ENCODE measurements at regions of chr12 and their contacts with region 1.

Region 1: DNA sequence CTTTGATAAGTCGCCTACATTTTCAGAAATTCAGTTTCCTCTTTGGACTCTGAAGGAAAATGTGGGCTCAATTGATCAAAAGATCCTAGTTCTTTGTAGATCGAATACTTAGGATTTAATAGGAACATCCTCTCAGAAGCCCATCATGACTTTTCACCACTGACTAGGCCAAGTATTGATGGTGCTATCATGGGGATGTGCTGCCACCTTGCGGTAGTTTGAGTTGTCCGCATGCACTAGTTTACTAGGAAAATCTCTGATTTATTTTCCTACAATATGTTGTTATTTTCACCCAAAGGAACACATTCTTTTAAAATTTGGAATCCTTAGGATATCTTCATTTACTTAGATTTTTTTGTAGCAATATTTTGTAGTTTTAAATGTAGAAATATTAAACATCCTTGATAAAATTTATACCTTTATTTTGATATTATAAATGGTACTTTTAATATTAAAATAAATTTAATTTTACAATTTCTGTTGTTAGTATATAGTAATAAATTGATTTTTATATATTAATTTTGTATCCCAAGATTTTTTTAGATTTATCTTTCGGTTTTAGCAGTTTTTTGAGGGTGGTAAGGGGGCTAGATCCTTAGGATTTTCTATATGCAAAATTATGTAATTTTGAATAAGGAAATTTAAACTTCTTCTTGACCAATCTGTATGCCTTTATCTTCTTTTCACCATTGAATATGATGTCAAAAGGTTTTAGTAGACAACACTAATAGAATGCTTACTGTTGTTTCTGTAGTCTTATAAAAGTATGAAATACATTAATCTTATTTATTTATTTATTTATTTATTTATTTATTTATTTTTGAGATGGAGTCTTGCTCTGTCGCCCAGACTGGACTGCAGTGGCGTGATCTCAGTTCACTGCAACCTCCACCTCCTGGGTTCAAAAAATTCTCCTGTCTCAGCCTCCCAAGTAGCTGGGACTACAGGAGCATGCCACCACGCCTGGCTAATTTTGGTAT is 52.9 kb upstream of the OR9K2 start:
- DNase-seq: peak; percentile 80
- H3K4me3 Mint-ChIP-seq: no peak overlapping the region
- H3K27ac Mint-ChIP-seq: no peak overlapping the region
- H3K4me1 Mint-ChIP-seq: no peaks in the 10 kb centered on the region
- H3K27me3 Mint-ChIP-seq: peaks cover 35% of the 10 kb centered on the region
- CTCF ChIP-seq: peak; percentile 86

Region 2: DNA sequence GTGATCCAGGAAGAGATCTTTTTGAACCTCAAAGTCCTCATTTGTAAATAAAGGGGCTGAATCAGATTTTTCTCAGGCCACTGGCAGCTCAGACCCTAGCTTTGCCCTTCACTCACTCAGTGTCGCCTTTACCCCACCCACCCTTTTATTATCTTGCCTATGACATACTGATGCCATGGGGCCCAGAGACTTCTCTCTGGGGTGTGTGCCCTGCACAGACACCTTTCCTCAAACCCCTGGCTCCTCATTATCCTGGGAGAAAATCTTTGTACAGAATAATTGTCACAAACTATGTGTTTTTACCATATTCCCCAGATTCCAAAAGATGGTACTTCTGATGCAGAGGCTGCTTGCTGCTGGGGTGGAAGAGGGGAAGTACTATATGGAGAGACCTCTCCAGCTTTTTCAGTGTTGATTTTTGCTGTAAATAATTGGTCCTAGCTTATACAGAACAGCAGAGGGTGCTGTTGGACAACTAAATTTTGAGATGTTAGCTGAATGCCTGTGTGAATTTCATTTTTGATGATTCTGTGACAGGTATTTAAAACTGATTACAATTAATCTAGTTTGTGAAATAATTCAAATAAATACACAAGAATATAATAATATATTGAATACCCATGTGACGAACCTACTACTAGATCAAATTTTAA is 371.3 kb before region 1 on chr12:
- CTCF ChIA-PET with region 1: interaction called, 10 read pairs
- intact Hi-C with region 1: loop called (anchors 2 kb)
- DNase-seq: peak; percentile 25
- H3K4me3 Mint-ChIP-seq: no peak overlapping the region
- H3K27ac Mint-ChIP-seq: no peak overlapping the region
- H3K4me1 Mint-ChIP-seq: no peaks in the 10 kb centered on the region
- H3K27me3 Mint-ChIP-seq: peaks cover 76% of the 10 kb centered on the region
- CTCF ChIP-seq: peak; percentile 50

Region 3: DNA sequence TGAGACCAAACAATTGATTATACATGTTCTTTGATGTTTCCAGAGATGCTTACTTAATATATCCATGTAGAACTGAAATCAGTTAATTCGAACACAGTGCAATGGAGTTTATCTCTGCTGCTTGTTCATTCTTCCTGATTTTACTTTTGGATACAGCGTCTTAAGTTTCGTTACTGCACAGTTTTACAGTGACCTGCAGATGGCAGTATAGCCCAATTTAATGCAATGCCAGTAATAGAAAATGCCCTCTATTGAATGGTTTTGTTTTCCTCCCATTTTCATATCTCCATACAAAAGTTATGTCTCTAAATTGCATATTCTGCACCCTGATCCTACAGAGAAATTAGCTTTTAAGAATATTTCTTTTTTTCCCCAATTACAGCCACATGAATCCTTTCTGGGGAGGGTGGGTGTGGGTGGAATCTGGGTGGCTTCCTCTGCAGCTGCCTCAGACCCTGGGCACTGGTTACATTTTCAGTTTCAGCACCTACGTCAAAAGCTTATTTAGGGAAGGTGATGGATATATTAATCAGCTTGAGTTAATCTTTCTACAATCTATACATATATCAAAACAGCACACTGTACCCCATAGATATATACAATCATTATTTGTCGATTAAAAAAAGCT is 324.0 kb before region 1 on chr12:
- CTCF ChIA-PET with region 1: interaction called, 5 read pairs
- intact Hi-C with region 1: loop called (anchors 1 kb)
- DNase-seq: peak; percentile 59
- H3K4me3 Mint-ChIP-seq: no peak overlapping the region
- H3K27ac Mint-ChIP-seq: no peak overlapping the region
- H3K4me1 Mint-ChIP-seq: no peaks in the 10 kb centered on the region
- H3K27me3 Mint-ChIP-seq: peaks cover 42% of the 10 kb centered on the region
- CTCF ChIP-seq: peak; percentile 78

Region 4: DNA sequence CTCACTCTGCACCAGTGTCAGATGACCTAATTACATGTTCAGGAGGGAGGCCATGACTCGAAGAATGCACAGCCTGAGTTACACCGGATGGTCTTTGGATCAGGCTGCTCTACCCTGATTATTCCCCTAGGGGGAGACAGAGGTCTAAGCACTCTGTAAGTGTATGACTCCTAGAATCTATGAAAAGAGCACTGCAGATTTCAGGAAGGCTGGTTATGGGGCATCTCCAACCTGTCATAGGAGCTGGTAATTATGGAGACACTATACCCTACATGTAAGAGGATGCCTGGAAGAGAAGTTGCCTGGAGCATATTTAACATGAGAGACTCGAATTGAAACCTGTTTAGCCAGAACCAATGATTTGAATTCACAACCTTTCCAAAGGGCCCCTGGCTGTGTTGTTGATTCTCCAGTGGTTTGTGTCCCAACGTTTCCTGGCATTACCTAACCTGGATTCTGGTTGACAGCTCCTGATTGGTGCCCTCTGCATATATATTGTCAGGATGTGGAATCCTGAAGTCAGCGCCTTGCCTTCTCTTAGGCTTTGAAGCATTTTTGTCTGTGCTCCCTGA is 219.3 kb before region 1 on chr12 and contains the start of gene MUCL1:
- CTCF ChIA-PET with region 1: no interaction called
- intact Hi-C with region 1: loop called (anchors 5 kb)
- DNase-seq: peak; percentile 83
- H3K4me3 Mint-ChIP-seq: no peak within 1 kb of the TSS
- H3K27ac Mint-ChIP-seq: no peak within 1 kb of the TSS
- H3K4me1 Mint-ChIP-seq: no peaks in the 10 kb centered on the region
- H3K27me3 Mint-ChIP-seq: peaks cover 72% of the 10 kb centered on the region
- CTCF ChIP-seq: peak; percentile 82
- total RNA-seq, gene MUCL1: not detected in 2 replicates

Region 5: DNA sequence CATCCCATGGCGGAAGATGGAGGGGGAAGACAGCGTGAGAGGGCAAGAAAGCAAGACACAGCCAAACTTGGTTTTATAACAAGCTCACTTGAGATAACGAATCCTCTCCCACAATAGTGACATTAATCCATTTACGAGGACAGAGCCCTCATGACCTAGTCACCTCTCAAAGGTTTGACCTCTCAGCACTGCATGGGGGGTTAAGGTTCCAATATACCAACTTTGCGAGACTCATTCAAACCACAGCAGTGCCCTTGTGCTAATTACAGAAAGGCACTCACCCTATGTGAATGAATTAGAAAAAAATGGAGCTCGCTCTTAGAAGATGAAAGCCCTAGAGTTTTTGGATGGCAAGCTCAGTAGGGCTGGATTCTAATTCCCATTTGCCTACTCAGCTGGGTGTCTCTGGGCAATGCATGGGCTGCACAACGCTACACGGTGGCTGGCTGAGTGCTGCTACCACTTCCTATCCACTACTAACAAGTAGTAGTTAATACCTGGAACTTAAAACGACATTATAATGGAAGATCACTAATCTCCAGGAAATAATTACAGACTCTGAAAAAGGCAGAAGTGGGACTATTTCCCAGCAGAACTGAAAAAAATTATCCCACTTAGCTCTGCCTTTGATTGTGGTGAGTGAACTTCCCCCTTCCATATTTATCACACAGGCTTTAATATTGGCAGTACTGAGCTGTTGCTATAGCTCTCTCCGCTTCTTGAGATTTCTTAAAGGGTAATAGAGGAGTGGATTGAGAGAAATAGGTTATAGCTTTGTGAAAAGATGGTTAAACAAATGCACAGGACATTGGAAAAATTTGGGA is 116.3 kb before region 1 on chr12:
- CTCF ChIA-PET with region 1: no interaction called
- intact Hi-C with region 1: no loop called
- DNase-seq: no peak
- H3K4me3 Mint-ChIP-seq: no peak overlapping the region
- H3K27ac Mint-ChIP-seq: no peak overlapping the region
- H3K4me1 Mint-ChIP-seq: no peaks in the 10 kb centered on the region
- H3K27me3 Mint-ChIP-seq: peaks cover 75% of the 10 kb centered on the region
- CTCF ChIP-seq: no peak

Region 6: DNA sequence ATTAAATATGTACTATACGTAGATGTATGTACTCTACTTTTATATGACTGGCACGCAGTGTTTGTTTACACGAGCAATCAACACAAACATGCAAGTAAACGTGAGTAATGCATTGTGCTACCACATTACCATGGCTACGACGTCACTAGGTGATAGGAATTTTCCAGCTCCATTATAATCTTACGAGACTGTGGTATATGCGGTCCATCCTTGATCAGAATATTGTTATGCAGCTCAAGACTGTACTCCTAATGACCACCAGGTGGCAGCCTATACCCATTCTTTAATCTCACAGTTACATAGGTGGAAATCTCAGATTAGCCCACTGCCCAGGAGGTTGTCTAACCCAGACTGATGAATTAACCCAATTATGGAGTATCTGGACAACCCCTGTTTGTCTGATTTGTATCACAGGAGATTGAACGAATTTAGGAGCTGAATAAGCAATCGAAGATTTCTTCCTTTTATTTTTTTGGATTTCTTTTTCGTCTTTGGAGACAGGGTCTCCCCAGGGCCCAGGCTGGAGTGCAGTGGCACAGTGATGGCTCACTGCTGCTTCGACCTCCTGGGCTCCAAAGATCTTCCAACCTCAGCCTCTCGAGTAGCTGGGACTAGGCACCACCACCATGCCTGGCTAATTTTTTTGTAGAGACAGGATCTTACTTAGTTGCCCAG is 80.0 kb before region 1 on chr12:
- CTCF ChIA-PET with region 1: interaction called, 58 read pairs
- intact Hi-C with region 1: loop called (anchors 1 kb)
- DNase-seq: peak; percentile 60
- H3K4me3 Mint-ChIP-seq: no peak overlapping the region
- H3K27ac Mint-ChIP-seq: no peak overlapping the region
- H3K4me1 Mint-ChIP-seq: no peaks in the 10 kb centered on the region
- H3K27me3 Mint-ChIP-seq: peaks cover 67% of the 10 kb centered on the region
- CTCF ChIP-seq: peak; percentile 75

Region 7: GRCh38 chr12:55024565-55024964 is 48.8 kb before region 1 on chr12:
- CTCF ChIA-PET with region 1: no interaction called
- intact Hi-C with region 1: loop called (anchors 1 kb)
- DNase-seq: no peak
- H3K4me3 Mint-ChIP-seq: no peak overlapping the region
- H3K27ac Mint-ChIP-seq: no peak overlapping the region
- H3K4me1 Mint-ChIP-seq: peaks cover 7% of the 10 kb centered on the region
- H3K27me3 Mint-ChIP-seq: peaks cover 68% of the 10 kb centered on the region
- CTCF ChIP-seq: no peak

Region 8: DNA sequence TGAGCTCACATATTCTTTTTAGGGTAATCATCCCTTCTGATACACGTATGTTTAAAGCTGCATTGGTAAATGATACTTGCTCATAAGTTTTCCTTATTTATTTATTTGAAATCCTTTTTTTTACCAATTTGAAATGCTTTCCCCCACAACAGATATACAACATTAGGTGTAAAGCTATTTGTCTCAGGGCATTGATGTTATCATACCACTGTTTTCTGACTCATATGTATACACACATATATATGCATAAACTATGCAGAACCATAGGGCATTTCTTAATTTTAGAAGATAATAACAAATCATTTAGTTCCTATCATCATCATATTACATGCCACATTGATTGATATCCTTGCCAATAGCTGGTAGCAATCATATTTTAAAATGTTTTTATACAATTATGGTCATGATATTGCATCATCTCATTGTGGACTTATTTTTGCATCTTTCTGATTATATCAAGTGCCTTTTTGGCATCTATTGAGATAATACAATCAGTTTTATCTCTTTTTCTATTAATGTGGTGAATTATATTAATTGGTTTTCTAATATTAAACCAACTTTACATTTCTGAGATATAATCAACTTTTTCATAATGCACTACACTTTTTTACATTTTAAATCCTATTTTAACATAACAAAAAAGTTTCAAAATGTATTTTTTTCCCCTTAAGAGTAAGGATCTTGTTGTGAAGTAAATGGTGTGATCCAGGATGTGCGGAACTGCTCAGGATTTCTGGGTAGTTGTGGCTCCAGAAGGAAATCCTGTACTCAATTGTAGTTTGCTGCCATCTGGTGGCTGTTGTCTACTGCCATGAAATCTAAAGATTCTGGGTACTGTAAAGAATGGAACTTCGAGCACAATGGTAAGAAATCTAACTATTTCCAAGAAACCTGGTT is 69.6 kb after region 1 on chr12:
- CTCF ChIA-PET with region 1: no interaction called
- intact Hi-C with region 1: loop called (anchors 5 kb)
- DNase-seq: peak; percentile 69
- H3K4me3 Mint-ChIP-seq: no peak overlapping the region
- H3K27ac Mint-ChIP-seq: no peak overlapping the region
- H3K4me1 Mint-ChIP-seq: no peaks in the 10 kb centered on the region
- H3K27me3 Mint-ChIP-seq: no peaks in the 10 kb centered on the region
- CTCF ChIP-seq: peak; percentile 63

Region 9: GRCh38 chr12:55246159-55246558 is 172.8 kb after region 1 on chr12:
- CTCF ChIA-PET with region 1: no interaction called
- intact Hi-C with region 1: no loop called
- DNase-seq: no peak
- H3K4me3 Mint-ChIP-seq: no peak overlapping the region
- H3K27ac Mint-ChIP-seq: no peak overlapping the region
- H3K4me1 Mint-ChIP-seq: no peaks in the 10 kb centered on the region
- H3K27me3 Mint-ChIP-seq: peaks cover 34% of the 10 kb centered on the region
- CTCF ChIP-seq: no peak

Measured in Calu3 (cell line).